B cell (primary cell): ENCODE measurements at regions of chr1 and their contacts with region 1.

Region 1: DNA sequence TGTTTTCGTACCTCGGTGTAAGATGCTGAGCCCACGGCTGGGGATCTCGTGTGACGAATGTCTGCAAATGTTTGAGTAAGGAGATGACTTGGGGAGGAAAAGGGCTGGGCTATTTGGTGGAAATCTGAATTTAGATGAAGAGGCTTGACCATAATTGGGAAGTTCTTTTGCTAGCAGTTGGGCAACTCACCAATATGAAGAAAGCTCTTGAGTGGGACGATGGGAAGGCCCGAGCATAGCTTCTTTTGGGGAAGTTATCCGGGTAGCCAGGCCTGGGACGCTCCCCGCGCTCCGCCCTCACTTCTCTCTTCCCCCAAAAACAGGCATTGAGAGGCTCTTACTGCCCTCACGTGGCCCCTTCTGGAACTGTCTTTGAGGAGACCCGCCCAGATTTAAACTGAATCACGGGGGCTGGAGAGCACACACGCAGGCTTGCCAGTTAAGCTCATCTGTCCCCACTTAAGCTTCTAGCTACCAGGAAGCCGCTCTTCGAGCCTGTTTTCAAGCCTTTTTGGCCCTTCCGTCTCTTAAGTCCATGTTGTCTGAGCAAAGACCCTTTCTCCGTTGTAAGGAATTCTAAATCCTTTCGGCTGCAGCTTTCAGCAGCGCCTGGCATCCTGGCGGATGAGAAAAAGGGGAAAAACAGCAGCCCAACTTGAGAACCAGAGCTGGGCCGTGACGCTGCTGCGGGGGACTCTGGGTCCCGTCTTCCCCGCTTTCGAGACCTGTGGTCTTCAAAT is 93.1 kb downstream of the NID1 start:
- DNase-seq: peak; percentile 94
- ATAC-seq: peak; percentile 99
- H3K4me3 ChIP-seq: peak overlapping the region; percentile 28 to 66 (median 55)
- H3K4me3 Mint-ChIP-seq: peak overlapping the region; percentile 79
- H3K27ac ChIP-seq: peak overlapping the region; percentile 72 to 86
- H3K27ac Mint-ChIP-seq: peak overlapping the region; percentile 95
- H3K4me1 ChIP-seq: peaks cover 17% of the 10 kb centered on the region in 2 donors
- H3K4me1 Mint-ChIP-seq: peaks cover 24% of the 10 kb centered on the region
- H3K27me3 ChIP-seq: no peaks in the 10 kb centered on the region
- H3K27me3 Mint-ChIP-seq: no peaks in the 10 kb centered on the region
- CTCF ChIP-seq: peak; percentile 85

Region 2: DNA sequence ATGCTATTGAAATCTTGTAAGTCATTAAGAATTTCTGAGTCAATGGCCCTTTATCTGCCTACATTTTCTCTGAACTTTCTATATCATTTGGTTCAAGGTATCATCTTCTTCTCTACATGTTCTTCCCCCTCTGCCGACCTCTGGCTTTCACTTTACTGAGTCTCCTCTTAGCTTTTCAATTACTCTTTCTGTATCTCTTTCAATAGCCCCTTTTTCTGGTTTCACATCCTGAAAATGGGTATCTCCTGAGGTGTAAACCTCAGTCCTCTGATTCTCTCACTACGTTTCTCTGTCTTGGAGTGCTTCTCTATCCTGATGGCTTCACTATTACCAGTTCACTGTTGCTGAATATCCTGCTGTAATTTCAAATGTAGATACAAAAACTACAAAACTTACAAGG is 203.9 kb before region 1 on chr1:
- CTCF ChIA-PET with region 1: interaction called, 12 read pairs
- POLR2A ChIA-PET with region 1: no interaction called
- intact Hi-C with region 1: loop called (anchors 5 kb)
- DNase-seq: peak; percentile 67
- ATAC-seq: peak; percentile 78
- H3K4me3 ChIP-seq: no peak overlapping the region
- H3K4me3 Mint-ChIP-seq: no peak overlapping the region
- H3K27ac ChIP-seq: no peak overlapping the region
- H3K27ac Mint-ChIP-seq: no peak overlapping the region
- H3K4me1 ChIP-seq: peaks cover 3 to 22% of the 10 kb centered on the region in 2 donors
- H3K4me1 Mint-ChIP-seq: peaks cover 15% of the 10 kb centered on the region
- H3K27me3 ChIP-seq: no peaks in the 10 kb centered on the region
- H3K27me3 Mint-ChIP-seq: no peaks in the 10 kb centered on the region
- CTCF ChIP-seq: no peak

Region 3: DNA sequence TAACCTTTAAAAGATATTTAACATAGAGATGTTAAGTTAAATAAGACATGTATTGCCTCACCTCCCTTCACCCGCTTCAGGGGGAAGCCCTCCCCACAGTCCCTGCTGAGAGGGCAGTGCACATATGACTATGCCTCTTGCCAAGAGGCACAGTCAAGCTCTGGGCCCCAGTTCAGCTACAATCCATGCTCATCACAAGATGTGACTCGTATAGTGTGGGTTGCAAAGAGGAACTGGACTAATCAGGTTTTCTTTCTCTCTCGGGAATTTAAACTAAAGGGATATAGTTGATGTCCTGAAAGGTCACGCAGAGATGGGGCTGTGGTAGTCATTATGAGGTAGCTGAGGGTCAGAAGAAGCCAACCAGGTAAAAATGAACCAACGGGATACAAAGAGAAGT is 140.6 kb before region 1 on chr1:
- CTCF ChIA-PET with region 1: interaction called, 21 read pairs
- POLR2A ChIA-PET with region 1: interaction called, 8 read pairs
- intact Hi-C with region 1: no loop called
- DNase-seq: no peak
- ATAC-seq: peak; percentile 73
- H3K4me3 ChIP-seq: no peak overlapping the region
- H3K4me3 Mint-ChIP-seq: no peak overlapping the region
- H3K27ac ChIP-seq: peak overlapping the region in 1 of 2 donors; percentile 52
- H3K27ac Mint-ChIP-seq: peak overlapping the region; percentile 44
- H3K4me1 ChIP-seq: peaks cover 0 to 4% of the 10 kb centered on the region in 2 donors
- H3K4me1 Mint-ChIP-seq: peaks cover 19% of the 10 kb centered on the region
- H3K27me3 ChIP-seq: no peaks in the 10 kb centered on the region
- H3K27me3 Mint-ChIP-seq: no peaks in the 10 kb centered on the region
- CTCF ChIP-seq: no peak

Region 4: GRCh38 chr1:235866913-235867845 is 104.6 kb before region 1 on chr1:
- CTCF ChIA-PET with region 1: interaction called, 66 read pairs
- POLR2A ChIA-PET with region 1: interaction called, 11 read pairs
- intact Hi-C with region 1: loop called (anchors 1 kb)
- DNase-seq: peak; percentile 98
- ATAC-seq: peak; percentile 74
- H3K4me3 ChIP-seq: peak overlapping the region; percentile 62 to 97 (median 93)
- H3K4me3 Mint-ChIP-seq: peak overlapping the region; percentile 91
- H3K27ac ChIP-seq: peak overlapping the region; percentile 94 to 99
- H3K27ac Mint-ChIP-seq: peak overlapping the region; percentile 94
- H3K4me1 ChIP-seq: peaks cover 38 to 42% of the 10 kb centered on the region in 2 donors
- H3K4me1 Mint-ChIP-seq: peaks cover 50% of the 10 kb centered on the region
- H3K27me3 ChIP-seq: no peaks in the 10 kb centered on the region
- H3K27me3 Mint-ChIP-seq: no peaks in the 10 kb centered on the region
- CTCF ChIP-seq: no peak

Region 5: GRCh38 chr1:235923466-235924021 is 48.2 kb before region 1 on chr1:
- CTCF ChIA-PET with region 1: interaction called, 23 read pairs
- POLR2A ChIA-PET with region 1: no interaction called
- intact Hi-C with region 1: no loop called
- DNase-seq: peak; percentile 63
- ATAC-seq: peak; percentile 78
- H3K4me3 ChIP-seq: peak overlapping the region in 2 of 5 experiments; percentile 2 to 17
- H3K4me3 Mint-ChIP-seq: peak overlapping the region; percentile 69
- H3K27ac ChIP-seq: peak overlapping the region; percentile 45 to 61
- H3K27ac Mint-ChIP-seq: peak overlapping the region; percentile 51
- H3K4me1 ChIP-seq: peaks cover 30% of the 10 kb centered on the region in 2 donors
- H3K4me1 Mint-ChIP-seq: peaks cover 51% of the 10 kb centered on the region
- H3K27me3 ChIP-seq: no peaks in the 10 kb centered on the region
- H3K27me3 Mint-ChIP-seq: no peaks in the 10 kb centered on the region
- CTCF ChIP-seq: no peak

Region 6: GRCh38 chr1:235946571-235946981 is 25.2 kb before region 1 on chr1:
- CTCF ChIA-PET with region 1: interaction called, 14 read pairs
- POLR2A ChIA-PET with region 1: interaction called, 3 read pairs
- intact Hi-C with region 1: no loop called
- DNase-seq: no peak
- ATAC-seq: peak; percentile 61
- H3K4me3 ChIP-seq: peak overlapping the region in 1 of 5 experiments; percentile 34
- H3K4me3 Mint-ChIP-seq: peak overlapping the region; percentile 64
- H3K27ac ChIP-seq: peak overlapping the region; percentile 9 to 68
- H3K27ac Mint-ChIP-seq: peak overlapping the region; percentile 79
- H3K4me1 ChIP-seq: peaks cover 78 to 88% of the 10 kb centered on the region in 2 donors
- H3K4me1 Mint-ChIP-seq: peaks cover 81% of the 10 kb centered on the region
- H3K27me3 ChIP-seq: no peaks in the 10 kb centered on the region
- H3K27me3 Mint-ChIP-seq: no peaks in the 10 kb centered on the region
- CTCF ChIP-seq: no peak

Region 7: GRCh38 chr1:236064674-236065508 is 93.2 kb after region 1 on chr1 and contains the start of gene NID1:
- CTCF ChIA-PET with region 1: interaction called, 6 read pairs
- POLR2A ChIA-PET with region 1: no interaction called
- intact Hi-C with region 1: loop called (anchors 10 kb)
- DNase-seq: peak; percentile 66
- ATAC-seq: no peak
- H3K4me3 ChIP-seq: peak within 1 kb of the TSS in 4 of 5 experiments; percentile 40 to 68 (median 58)
- H3K4me3 Mint-ChIP-seq: peak within 1 kb of the TSS; percentile 75
- H3K27ac ChIP-seq: no peak within 1 kb of the TSS
- H3K27ac Mint-ChIP-seq: peak within 1 kb of the TSS; percentile 10
- H3K4me1 ChIP-seq: peaks cover 38% of the 10 kb centered on the region in 2 donors
- H3K4me1 Mint-ChIP-seq: peaks cover 30% of the 10 kb centered on the region
- H3K27me3 ChIP-seq: peaks cover 0 to 37% (median 15%) of the 10 kb centered on the region in 4 experiments
- H3K27me3 Mint-ChIP-seq: peaks cover 27% of the 10 kb centered on the region
- CTCF ChIP-seq: peak; percentile 21
- total RNA-seq, gene NID1: not detected in 2 replicates